Heart right ventricle (tissue), 16 donors: ENCODE measurements at regions of chr1 and their contacts with region 1.

Region 1: DNA sequence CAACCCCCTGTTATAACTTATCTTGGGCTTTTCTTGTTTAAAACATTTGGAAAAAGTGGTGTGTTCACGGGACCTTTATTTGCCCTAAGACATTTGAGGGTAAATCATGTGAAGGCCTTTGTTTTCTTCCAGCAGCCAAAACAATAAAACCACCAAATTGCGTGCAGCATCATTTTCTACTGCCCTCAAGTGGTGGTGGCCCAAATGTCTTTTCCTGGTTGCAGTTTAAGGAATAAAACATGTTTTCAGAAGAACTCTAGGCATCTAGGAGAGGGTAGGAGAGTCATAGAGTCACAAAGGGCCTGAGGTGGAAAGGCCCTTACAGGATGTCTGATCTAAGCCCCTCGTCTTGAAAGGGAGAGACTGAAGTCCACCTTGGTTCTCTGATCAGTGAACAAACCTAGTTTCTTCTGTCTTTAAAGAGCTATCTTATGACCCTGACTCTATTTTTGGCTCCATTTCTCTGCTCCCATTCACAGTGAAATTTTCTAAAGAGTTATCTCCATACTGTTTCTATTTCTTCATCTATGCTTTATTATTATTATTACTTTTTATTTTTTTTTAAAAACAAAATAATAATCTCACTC is 16.0 kb upstream of the EPS15 start:
- DNase-seq: peak in 1 of 2 donors; percentile 54
- ATAC-seq: peak in 7 of 8 donors; percentile 44 to 78 (median 57)
- H3K4me3 ChIP-seq: no peak overlapping the region
- H3K27ac ChIP-seq: peak overlapping the region in 3 of 10 donors; percentile 1 to 8 (median 4)
- H3K4me1 ChIP-seq: peaks cover 0 to 11% (median 6%) of the 10 kb centered on the region in 9 donors
- H3K27me3 ChIP-seq: no peaks in the 10 kb centered on the region
- CTCF ChIP-seq: peak; percentile 56 to 83 (median 74)

Region 2: DNA sequence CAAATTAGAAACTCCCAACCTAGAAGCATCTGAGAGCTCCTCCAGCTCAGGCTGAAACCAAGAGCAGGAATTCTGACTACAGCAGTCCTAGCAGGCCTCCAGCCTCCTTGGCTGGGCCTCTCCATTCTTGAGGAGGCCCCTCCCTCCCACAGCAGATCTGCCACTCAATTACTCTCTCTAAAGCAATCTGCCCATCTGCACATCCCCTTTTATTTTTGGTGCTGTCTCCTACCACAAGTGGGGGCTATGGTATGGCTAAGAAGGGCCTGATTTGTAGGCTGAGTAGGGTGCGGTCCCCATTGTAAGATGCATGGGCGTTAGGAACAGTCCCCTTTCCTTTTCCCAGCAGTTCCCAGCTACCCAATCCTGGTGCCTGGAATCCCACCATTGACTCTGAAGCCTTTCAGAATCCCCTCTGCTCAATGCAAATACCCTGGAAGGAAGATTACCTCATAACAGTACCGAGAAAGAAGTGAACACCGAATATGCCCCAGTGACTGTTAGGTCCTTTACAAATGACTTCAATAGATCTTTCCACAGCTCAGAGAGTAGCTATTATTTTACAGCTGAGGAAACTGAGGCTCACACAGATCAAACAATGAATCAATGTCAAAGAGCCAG is 193.1 kb before region 1 on chr1:
- intact Hi-C with region 1: loop called in 1 of 10 experiments (anchors 10 kb)
- DNase-seq: no peak
- ATAC-seq: no peak
- H3K4me3 ChIP-seq: no peak overlapping the region
- H3K27ac ChIP-seq: no peak overlapping the region
- H3K4me1 ChIP-seq: peaks cover 0 to 18% (median 7%) of the 10 kb centered on the region in 9 donors
- H3K27me3 ChIP-seq: peaks cover 10 to 37% (median 33%) of the 10 kb centered on the region in 7 donors
- CTCF ChIP-seq: no peak

Region 3: DNA sequence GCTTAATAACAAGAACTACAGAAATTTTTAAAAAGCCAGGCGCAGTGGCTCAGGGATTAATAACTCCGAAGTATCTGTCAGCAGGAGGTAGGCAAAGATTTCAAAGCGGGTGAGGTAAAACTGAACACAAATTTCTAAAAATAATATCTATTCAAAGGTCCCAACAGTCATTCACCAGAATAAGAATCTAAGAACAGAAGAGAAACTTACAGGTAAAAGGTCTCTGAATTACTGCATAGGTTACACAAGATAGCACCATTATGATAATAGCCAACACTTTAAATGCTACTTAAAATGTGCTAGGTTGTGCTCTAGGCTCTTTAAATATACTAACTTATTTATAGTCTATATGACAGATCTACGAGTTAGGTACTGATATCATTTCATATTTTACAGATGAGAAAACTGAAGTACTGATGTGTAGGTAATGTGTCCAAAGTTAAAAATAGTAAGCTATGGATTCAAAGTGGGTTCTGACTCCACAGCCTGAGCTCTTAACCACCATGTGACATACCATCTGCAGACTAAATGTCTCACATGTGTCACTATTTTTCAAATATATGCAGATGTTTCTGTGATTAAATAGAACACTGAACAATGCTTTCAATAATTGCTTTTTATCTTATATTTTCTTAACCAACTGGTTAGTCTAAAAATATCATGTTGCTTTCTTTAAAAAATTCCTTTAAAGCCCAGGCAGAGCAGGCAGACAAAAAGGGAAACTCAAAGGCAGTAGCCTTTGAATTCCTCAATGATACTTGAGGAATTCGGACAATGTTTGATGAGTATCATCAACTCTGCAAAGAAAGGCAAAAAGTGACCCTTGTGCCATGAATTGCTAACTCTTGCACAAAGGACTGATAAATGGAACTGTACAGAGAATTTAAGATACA is 124.3 kb before region 1 on chr1:
- intact Hi-C with region 1: loop called in 1 of 10 experiments (anchors 10 kb)
- DNase-seq: no peak
- ATAC-seq: peak in 3 of 8 donors; percentile 50 to 52 (median 51)
- H3K4me3 ChIP-seq: no peak overlapping the region
- H3K27ac ChIP-seq: peak overlapping the region in 5 of 10 donors; percentile 42 to 60 (median 44)
- H3K4me1 ChIP-seq: peaks cover 0 to 19% (median 5%) of the 10 kb centered on the region in 9 donors
- H3K27me3 ChIP-seq: no peaks in the 10 kb centered on the region
- CTCF ChIP-seq: no peak